ENCODE measurements at regions of chr7 and their contacts with region 1.

Region 1: GRCh38 chr7:117127585-117128168 is 174.4 kb downstream of the ST7 start:
- DNase-seq: peak in 4 of 10 donors; percentile 37 to 76 (median 62)
- H3K4me3 ChIP-seq: no peak overlapping the region
- H3K27ac ChIP-seq: peak overlapping the region in 3 of 59 donors; percentile 9 to 72 (median 11)
- H3K27me3 ChIP-seq: no peaks in the 10 kb centered on the region
- CTCF ChIP-seq: peak; percentile 72 to 93 (median 84)

Region 2: DNA sequence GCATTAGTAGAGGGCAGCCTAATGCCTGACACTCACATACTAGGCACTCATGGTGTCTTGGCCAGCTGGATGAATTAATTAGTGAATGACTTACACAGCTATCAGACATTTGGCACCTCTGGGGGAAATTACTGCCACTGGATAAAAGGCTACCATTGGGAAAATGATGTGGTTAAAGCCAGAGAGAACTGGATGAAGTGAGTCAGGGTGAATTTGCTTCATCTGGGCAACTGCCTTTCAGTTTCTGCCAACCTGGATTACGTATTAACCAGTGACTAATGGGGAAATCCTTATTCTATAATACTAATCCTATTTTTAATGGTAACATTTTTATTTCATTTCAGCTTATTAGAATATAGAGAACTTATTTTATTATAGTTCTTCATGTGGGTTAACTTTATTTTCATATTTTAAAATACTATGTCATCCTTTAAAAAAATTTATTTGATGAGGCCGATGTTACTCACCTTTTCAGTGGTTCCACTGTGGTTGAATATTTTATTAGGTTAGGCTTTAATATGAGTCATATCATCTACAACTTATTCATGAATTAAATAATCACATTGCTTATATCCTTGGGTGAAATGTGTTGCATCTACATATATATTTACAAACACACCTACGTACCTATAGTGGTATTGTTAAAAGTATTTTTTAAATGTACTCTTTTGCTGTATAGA is 350.9 kb before region 1 on chr7:
- intact Hi-C with region 1: no loop called
- DNase-seq: no peak
- H3K4me3 ChIP-seq: no peak overlapping the region
- H3K27ac ChIP-seq: peak overlapping the region in 8 of 59 donors; percentile 11 to 42 (median 26)
- H3K27me3 ChIP-seq: peaks cover 0 to 6% (median 0%) of the 10 kb centered on the region in 45 donors
- CTCF ChIP-seq: no peak

Region 3: DNA sequence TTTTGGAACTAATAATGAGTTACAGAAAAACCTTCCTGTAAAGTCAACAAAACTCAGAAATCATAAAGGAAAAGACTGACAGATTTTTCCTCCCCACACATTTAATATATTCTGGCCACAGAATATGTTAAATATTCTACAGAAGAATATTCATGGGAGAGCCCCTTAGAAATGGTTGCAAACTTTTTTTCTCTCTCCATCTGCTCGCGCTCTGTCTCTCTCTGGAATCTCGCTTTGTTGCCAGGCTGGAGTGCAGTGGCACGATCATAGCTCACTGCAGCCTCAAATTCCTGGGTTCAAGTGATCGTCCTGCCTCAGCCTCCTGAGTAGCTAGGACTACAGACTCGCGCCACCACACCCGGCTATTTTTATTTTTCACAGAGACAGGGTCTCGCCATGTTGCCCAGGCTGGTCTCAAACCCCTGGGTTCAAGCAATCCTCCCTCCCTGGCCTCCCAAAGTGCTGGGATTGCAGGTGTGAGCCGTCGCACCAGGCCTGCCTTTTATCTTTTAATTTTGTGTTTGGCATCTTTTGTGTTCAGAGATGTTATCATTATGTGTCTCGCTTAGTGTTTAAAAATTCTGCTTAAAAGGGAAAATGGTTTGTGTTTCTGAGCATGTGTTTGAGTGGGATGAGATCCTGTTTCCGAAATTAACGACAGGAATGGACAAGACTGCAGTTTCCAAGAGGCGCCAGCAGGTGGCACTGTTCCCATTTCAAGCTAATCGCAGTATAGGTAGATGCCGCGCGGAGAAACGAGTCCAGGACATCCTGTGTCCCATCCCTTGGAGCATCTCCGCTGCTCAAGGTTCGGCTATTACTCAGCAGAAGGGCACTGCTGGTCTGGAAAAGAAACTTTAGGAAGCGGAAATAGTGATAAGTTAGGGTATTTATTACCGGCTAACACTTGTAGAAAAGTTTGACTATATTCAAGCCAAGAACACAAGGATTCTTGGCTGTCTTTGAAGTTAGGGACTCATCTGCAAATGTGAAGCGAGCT is 197.5 kb before region 1 on chr7:
- intact Hi-C with region 1: loop called in 1 of 2 experiments (anchors 10 kb)
- DNase-seq: peak; percentile 81 to 92 (median 87)
- H3K4me3 ChIP-seq: peak overlapping the region in 36 of 59 donors; percentile 1 to 48 (median 25)
- H3K27ac ChIP-seq: no peak overlapping the region
- H3K27me3 ChIP-seq: no peaks in the 10 kb centered on the region
- CTCF ChIP-seq: peak; percentile 86 to 98 (median 94)

Region 4: DNA sequence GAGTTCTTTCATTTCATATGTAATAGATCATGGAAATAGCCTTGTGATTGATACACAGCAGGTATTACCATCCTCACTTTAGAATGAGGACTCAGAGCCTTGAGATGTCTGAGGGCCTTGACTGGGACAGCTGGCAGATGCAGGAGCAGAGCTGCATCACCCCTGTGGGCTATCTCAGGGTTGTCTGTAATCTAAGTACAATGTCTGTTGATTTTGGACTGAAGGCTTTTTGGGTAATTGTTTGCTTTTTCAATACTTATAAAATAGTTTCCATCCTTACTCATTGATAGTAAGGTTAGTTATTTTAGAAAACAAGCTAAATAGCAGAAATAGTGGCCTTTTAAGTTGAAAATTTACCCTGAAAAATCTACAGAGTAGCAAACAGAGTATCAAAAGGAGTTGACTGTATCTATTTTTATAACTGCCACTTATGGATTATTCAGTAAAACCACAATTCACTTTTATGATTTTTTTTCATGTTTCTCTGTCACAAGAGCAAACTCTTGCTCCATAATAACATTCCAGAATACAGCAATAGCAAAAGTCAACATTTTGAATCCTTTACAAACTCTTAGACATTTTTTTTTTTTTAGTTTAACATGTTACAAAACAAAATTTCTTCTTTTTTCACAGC is 531.9 kb after region 1 on chr7:
- intact Hi-C with region 1: no loop called
- DNase-seq: no peak
- H3K4me3 ChIP-seq: no peak overlapping the region
- H3K27ac ChIP-seq: no peak overlapping the region
- H3K27me3 ChIP-seq: peaks cover 0 to 4% (median 0%) of the 10 kb centered on the region in 45 donors
- CTCF ChIP-seq: no peak

Measured in dorsolateral prefrontal cortex (tissue), 120 donors.